Head of caudate nucleus (tissue), 42 donors: ENCODE measurements at regions of chr3 and their contacts with region 1.

Region 1: DNA sequence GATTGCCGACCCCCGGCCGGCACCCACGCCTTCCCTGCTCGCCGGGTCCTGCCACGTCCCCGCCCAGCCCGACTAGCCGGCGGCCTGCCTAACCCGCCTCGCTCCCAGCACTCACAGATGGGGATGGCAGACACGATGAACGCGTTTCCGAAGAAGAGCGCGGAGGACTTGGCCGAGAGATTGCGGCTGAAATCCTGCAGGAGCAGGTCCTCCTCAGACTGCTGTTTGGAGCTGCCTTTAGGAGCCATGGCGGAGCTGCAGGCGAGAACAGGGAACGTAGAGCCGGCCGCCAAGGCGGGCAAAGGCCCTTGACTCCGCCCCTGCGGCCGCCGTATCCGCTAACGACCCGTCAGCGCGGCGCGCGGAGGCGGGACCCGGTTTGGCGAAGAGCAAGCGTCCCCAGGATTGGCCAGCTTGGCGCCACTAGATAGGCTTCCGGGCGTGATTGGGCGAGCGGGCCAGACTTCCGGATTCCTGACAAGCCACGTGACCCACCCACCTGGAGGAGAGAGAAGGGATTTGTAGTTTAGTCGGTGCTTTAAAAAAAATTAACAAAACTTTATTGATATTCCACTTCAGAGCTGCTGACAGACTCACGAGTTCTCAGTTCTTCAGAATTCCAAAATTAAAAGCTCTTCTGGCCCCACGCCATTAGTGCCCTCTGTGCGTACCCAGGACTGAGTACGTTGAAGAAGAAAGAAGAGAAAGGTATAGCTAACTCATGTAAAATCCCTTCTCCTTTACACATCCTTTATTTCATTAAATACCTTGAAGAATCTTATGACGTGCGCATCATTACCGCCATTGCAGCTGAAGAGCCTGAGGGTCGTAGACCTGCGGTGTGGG is at the start of gene SSR3:
- DNase-seq: peak; percentile 98 to 100 (median 99)

Region 2: GRCh38 chr3:156396851-156397250 is 158.2 kb before region 1 on chr3:
- intact Hi-C with region 1: no loop called
- DNase-seq: no peak

Region 3: GRCh38 chr3:156576651-156577343 is 21.7 kb after region 1 on chr3:
- intact Hi-C with region 1: no loop called
- DNase-seq: no peak

Region 4: DNA sequence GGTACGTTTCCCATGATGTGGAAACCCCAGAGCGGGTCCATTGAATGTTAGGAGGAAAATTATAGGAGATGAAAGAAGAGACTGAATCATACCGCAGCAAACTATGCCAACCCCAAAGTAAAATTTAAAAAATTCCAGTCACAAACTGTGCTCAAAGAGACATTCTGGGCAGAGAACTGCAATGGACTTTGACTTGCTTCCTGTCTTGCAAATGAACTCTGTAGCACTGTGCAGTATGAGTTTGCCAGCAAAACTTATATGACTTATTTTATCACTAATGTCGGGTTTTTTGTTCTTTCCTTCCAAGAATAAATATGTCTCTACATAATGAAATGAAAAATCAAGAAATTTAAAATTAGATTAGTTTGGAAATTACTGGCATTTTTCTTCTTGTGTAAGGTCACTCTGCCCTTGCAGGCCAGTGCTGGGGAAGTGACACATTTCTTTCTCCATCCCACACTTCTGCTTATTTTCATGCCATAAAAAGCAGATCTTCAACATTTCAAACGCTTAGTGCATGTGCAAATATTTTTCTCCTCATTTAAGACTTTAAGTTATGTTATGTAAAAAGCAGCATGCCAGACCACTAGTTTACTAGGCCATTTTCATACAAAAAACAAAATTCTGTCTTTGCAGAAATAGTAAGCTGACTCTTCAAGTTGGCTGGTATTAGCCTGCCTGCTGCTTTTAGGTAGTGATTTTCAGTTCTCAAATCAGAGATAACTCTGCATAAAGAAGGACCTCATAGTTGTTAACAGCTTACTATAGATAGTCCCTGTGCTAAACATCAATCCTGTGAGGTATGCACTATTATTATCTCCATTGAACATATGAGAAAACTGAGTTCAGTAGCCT is 32.1 kb after region 1 on chr3:
- intact Hi-C with region 1: no loop called
- DNase-seq: peak in 1 of 42 donors; percentile 58

Region 5: GRCh38 chr3:156643729-156644389 is 88.8 kb after region 1 on chr3:
- intact Hi-C with region 1: no loop called
- DNase-seq: peak in 20 of 42 donors; percentile 8 to 51 (median 27)

Region 6: GRCh38 chr3:157130467-157131251 is 575.6 kb after region 1 on chr3:
- intact Hi-C with region 1: loop called (anchors 10 kb)
- DNase-seq: peak in 35 of 42 donors; percentile 15 to 85 (median 55)